ENCODE measurements at regions of chr10 and their contacts with region 1.

Region 1: GRCh38 chr10:42638055-42638820 is at the start of gene ZNF33B:
- DNase-seq: peak; percentile 84 to 97 (median 93)
- ATAC-seq: peak; percentile 92
- H3K4me3 ChIP-seq: peak within 1 kb of the TSS; percentile 82 to 88
- H3K4me3 Mint-ChIP-seq: peak within 1 kb of the TSS; percentile 98
- H3K27ac ChIP-seq: peak within 1 kb of the TSS; percentile 91 to 93
- H3K27ac Mint-ChIP-seq: peak within 1 kb of the TSS; percentile 98
- H3K4me1 ChIP-seq: peaks cover 14% of the 10 kb centered on the region
- H3K4me1 Mint-ChIP-seq: peaks cover 44% of the 10 kb centered on the region
- H3K27me3 ChIP-seq: no peaks in the 10 kb centered on the region
- H3K27me3 Mint-ChIP-seq: no peaks in the 10 kb centered on the region
- CTCF ChIP-seq: no peak
- total RNA-seq, gene ZNF33B: 16.4 to 17.0 TPM

Region 2: GRCh38 chr10:42753126-42753506 is 114.9 kb after region 1 on chr10:
- CTCF ChIA-PET with region 1: no interaction called
- POLR2A ChIA-PET with region 1: no interaction called
- intact Hi-C with region 1: loop called in 1 of 2 experiments (anchors 10 kb)
- DNase-seq: peak; percentile 28 to 79 (median 62)
- ATAC-seq: peak; percentile 63
- H3K4me3 ChIP-seq: peak overlapping the region; percentile 47 to 71
- H3K4me3 Mint-ChIP-seq: peak overlapping the region; percentile 82
- H3K27ac ChIP-seq: no peak overlapping the region
- H3K27ac Mint-ChIP-seq: no peak overlapping the region
- H3K4me1 ChIP-seq: peaks cover 14% of the 10 kb centered on the region
- H3K4me1 Mint-ChIP-seq: peaks cover 6% of the 10 kb centered on the region
- H3K27me3 ChIP-seq: peaks cover 32 to 35% of the 10 kb centered on the region in 2 experiments
- H3K27me3 Mint-ChIP-seq: peaks cover 55% of the 10 kb centered on the region
- CTCF ChIP-seq: peak; percentile 62

Region 3: DNA sequence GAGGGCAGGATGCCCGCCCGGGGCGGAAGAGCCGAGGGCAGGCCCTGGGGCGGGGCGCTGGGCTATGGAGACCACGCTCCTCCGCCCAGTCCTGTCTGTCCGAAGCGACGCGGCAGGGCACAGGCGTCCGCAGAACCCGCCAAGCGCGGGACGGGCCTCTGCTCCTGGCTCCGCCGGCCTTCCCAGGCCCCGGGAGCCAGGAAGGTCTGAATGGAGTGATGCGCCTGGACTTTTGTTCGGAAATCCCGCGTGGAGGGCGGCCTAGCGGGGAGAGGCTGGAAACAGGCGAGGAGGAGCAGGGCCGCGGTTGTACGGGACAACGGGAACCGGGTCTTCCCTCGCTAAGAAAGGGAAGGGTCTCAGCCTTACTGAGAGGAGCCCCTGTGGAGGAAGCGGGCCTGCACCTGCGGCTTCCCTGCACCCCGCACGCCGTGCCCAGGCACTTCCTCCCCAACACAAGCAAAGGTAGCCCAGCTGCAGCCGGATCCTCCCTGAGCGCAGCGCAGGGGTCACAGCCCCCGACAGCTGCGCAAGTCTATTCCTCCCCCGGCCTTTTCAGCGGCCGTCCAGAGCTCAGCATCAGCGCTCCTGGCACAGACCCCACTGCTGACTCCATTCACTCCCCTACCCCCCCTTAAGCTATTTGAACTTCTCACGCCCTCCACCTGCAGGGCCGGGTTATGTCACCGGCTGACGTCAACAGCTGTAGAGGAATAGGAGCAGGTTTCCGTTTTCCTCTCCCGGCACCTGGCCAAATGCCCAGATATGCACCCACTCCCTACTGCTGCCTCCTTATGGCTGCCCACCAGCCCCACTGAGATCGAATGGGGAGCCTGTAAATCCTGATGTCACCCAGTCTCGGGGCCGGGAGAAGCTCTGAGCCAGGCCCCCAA is 295.5 kb after region 1 on chr10:
- CTCF ChIA-PET with region 1: no interaction called
- POLR2A ChIA-PET with region 1: no interaction called
- intact Hi-C with region 1: loop called (anchors 2 to 10 kb)
- DNase-seq: peak in 6 of 9 experiments; percentile 33 to 79 (median 64)
- ATAC-seq: peak; percentile 64
- H3K4me3 ChIP-seq: peak overlapping the region; percentile 51 to 78
- H3K4me3 Mint-ChIP-seq: peak overlapping the region; percentile 85
- H3K27ac ChIP-seq: peak overlapping the region; percentile 19 to 73
- H3K27ac Mint-ChIP-seq: peak overlapping the region; percentile 80
- H3K4me1 ChIP-seq: peaks cover 17% of the 10 kb centered on the region
- H3K4me1 Mint-ChIP-seq: peaks cover 12% of the 10 kb centered on the region
- H3K27me3 ChIP-seq: no peaks in the 10 kb centered on the region
- H3K27me3 Mint-ChIP-seq: peaks cover 13% of the 10 kb centered on the region
- CTCF ChIP-seq: no peak

Region 4: GRCh38 chr10:43574001-43574892 is 936.0 kb after region 1 on chr10 and contains the start of gene ZNF239:
- CTCF ChIA-PET with region 1: no interaction called
- POLR2A ChIA-PET with region 1: interaction called, 3 read pairs
- intact Hi-C with region 1: loop called in 1 of 2 experiments (anchors 1 kb)
- DNase-seq: peak; percentile 62 to 93 (median 82)
- ATAC-seq: peak; percentile 88
- H3K4me3 ChIP-seq: peak within 1 kb of the TSS; percentile 43 to 63
- H3K4me3 Mint-ChIP-seq: peak within 1 kb of the TSS; percentile 85
- H3K27ac ChIP-seq: peak within 1 kb of the TSS; percentile 38 to 66
- H3K27ac Mint-ChIP-seq: peak within 1 kb of the TSS; percentile 90
- H3K4me1 ChIP-seq: peaks cover 25% of the 10 kb centered on the region
- H3K4me1 Mint-ChIP-seq: peaks cover 51% of the 10 kb centered on the region
- H3K27me3 ChIP-seq: no peaks in the 10 kb centered on the region
- H3K27me3 Mint-ChIP-seq: no peaks in the 10 kb centered on the region
- CTCF ChIP-seq: no peak
- total RNA-seq, gene ZNF239: 0.75 to 1.1 TPM

Region 5: GRCh38 chr10:43648398-43649184 is 1010.4 kb after region 1 on chr10 and contains the start of gene ZNF32:
- CTCF ChIA-PET with region 1: no interaction called
- POLR2A ChIA-PET with region 1: no interaction called
- intact Hi-C with region 1: loop called (anchors 1 to 2 kb)
- DNase-seq: peak; percentile 60 to 89 (median 79)
- ATAC-seq: peak; percentile 97
- H3K4me3 ChIP-seq: peak within 1 kb of the TSS; percentile 74 to 92
- H3K4me3 Mint-ChIP-seq: peak within 1 kb of the TSS; percentile 97
- H3K27ac ChIP-seq: peak within 1 kb of the TSS; percentile 48 to 80
- H3K27ac Mint-ChIP-seq: peak within 1 kb of the TSS; percentile 92
- H3K4me1 ChIP-seq: peaks cover 14% of the 10 kb centered on the region
- H3K4me1 Mint-ChIP-seq: peaks cover 23% of the 10 kb centered on the region
- H3K27me3 ChIP-seq: no peaks in the 10 kb centered on the region
- H3K27me3 Mint-ChIP-seq: peaks cover 1% of the 10 kb centered on the region
- CTCF ChIP-seq: no peak
- total RNA-seq, gene ZNF32: 17.4 to 18.9 TPM